Activated CD4-positive, alpha-beta memory T cell treated with anti-CD3 and anti-CD28 coated beads for 36 hours (primary cell): ENCODE measurements at regions of chr12 and their contacts with region 1.

Region 1: DNA sequence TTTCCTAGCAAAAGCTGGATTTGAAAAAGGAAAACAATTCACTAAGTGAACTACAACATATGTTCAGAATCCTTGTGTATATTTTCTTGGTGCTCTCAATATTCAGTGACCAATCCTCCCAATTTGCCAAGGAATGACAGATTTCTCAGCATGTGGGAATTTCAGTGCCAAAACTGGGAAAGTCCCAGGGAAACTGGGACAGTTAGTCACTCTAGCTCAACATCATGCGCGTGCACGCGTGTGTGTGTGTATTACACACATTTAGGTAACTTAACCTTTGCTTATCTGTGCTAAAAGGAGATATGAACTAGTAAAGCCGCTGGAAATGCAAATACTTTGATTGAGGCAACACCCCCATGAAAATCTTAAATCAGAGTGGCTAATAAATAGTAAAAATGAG is 26.1 kb upstream of the SLC6A13 start:
- DNase-seq: no peak
- H3K4me3 Mint-ChIP-seq: no peak overlapping the region
- H3K27ac Mint-ChIP-seq: no peak overlapping the region
- H3K4me1 Mint-ChIP-seq: peaks cover 60% of the 10 kb centered on the region
- H3K27me3 Mint-ChIP-seq: no peaks in the 10 kb centered on the region

Region 2: GRCh38 chr12:153080-153746 is 135.5 kb before region 1 on chr12:
- CTCF ChIA-PET with region 1: no interaction called
- POLR2A ChIA-PET with region 1: no interaction called
- intact Hi-C with region 1: no loop called
- DNase-seq: peak; percentile 73
- H3K4me3 Mint-ChIP-seq: no peak overlapping the region
- H3K27ac Mint-ChIP-seq: no peak overlapping the region
- H3K4me1 Mint-ChIP-seq: no peaks in the 10 kb centered on the region
- H3K27me3 Mint-ChIP-seq: peaks cover 5% of the 10 kb centered on the region

Region 3: DNA sequence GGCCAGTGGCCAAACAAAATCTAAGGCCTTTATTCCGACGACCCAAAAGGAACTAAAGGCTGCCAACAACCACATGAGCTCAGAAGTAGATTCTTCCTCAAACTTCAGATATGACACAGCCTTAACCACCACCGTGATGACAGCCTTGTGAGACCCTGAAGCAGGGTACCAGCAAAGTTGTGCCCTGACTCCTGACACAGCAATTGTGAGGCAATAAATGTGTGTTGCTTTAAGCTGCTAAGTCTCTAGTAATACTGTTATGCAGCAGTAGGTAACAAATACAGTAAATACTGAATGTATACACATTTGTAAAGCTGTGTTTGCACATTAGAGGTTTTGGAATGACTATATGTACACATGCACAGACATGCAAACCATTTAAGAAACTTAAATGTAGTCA is 15.3 kb before region 1 on chr12:
- CTCF ChIA-PET with region 1: no interaction called
- POLR2A ChIA-PET with region 1: interaction called, 11 read pairs
- intact Hi-C with region 1: no loop called
- DNase-seq: peak; percentile 22
- H3K4me3 Mint-ChIP-seq: no peak overlapping the region
- H3K27ac Mint-ChIP-seq: no peak overlapping the region
- H3K4me1 Mint-ChIP-seq: peaks cover 9% of the 10 kb centered on the region
- H3K27me3 Mint-ChIP-seq: no peaks in the 10 kb centered on the region

Region 4: GRCh38 chr12:304805-305204 is 16.1 kb after region 1 on chr12:
- CTCF ChIA-PET with region 1: interaction called, 3 read pairs
- POLR2A ChIA-PET with region 1: interaction called, 6 read pairs
- intact Hi-C with region 1: loop called (anchors 1 kb)
- DNase-seq: no peak
- H3K4me3 Mint-ChIP-seq: no peak overlapping the region
- H3K27ac Mint-ChIP-seq: peak overlapping the region; percentile 0
- H3K4me1 Mint-ChIP-seq: peaks cover 46% of the 10 kb centered on the region
- H3K27me3 Mint-ChIP-seq: no peaks in the 10 kb centered on the region

Region 5: DNA sequence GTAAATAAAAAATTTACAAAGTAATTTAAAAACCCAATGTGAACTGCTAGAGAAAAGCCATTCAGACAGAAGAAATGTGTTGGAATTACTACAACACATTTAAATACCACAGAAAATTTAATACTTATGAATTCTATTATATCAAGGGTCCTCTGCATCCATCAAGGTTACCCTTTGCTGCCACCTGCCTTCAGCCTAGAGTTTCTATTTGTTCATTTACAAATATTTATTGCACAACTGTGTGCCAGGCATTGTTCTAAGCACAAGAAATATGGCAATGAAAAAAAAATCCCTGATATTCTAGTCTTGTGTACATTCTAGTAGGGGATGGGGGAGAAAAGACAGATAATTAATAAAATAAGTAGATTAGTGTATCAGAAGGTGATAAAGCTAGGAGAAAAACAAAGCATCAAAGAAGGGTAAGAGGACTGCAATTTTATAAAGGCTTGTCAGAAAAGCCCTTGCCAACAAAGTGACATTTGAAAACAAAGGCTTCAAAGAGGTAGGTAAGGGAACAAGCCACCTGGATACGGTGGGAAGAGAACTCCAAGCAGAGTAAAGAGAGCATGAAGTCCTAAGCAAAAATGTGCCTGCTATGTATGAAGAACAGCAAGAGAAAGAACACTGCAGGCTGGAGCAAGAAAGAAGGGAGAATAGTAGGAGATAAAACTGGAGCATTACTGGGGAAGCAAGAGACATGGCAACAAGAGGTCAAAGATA is 33.1 kb after region 1 on chr12:
- CTCF ChIA-PET with region 1: no interaction called
- POLR2A ChIA-PET with region 1: no interaction called
- intact Hi-C with region 1: loop called (anchors 5 kb)
- DNase-seq: no peak
- H3K4me3 Mint-ChIP-seq: no peak overlapping the region
- H3K27ac Mint-ChIP-seq: no peak overlapping the region
- H3K4me1 Mint-ChIP-seq: peaks cover 7% of the 10 kb centered on the region
- H3K27me3 Mint-ChIP-seq: no peaks in the 10 kb centered on the region

Region 6: GRCh38 chr12:366820-367219 is 78.1 kb after region 1 on chr12:
- CTCF ChIA-PET with region 1: no interaction called
- POLR2A ChIA-PET with region 1: no interaction called
- intact Hi-C with region 1: no loop called
- DNase-seq: no peak
- H3K4me3 Mint-ChIP-seq: no peak overlapping the region
- H3K27ac Mint-ChIP-seq: no peak overlapping the region
- H3K4me1 Mint-ChIP-seq: peaks cover under 1% of the 10 kb centered on the region
- H3K27me3 Mint-ChIP-seq: no peaks in the 10 kb centered on the region

Region 7: DNA sequence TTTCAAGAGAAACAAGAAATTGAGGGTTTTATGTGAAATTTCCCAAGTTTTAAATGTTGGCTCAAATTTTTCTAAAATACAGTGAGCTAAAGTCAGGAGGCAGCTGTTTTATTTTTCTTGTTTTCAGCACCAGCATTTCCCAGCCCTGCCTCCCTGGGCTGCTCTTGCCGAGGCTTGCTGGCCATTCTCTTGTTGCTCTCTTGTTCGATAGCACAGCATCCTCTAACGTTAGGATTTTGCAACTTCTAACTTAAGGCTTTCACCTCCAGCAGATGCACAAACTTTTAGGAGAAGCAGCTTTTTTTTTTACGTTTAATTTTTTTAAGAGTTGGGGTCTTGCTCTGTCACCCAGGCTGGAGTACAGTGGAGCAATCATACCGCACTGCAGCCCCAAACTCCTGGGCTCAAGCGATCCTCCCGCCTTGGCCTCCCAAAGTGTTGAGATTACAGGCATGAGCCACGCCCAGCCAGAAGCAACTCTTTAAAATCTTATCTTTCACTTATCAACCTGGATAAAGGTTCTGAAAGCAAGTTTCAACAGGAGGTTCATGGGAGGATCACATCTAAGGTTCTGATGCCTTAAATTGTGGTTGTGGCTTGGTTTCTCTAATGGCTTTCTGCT is 211.3 kb after region 1 on chr12:
- CTCF ChIA-PET with region 1: no interaction called
- POLR2A ChIA-PET with region 1: no interaction called
- intact Hi-C with region 1: no loop called
- DNase-seq: no peak
- H3K4me3 Mint-ChIP-seq: no peak overlapping the region
- H3K27ac Mint-ChIP-seq: no peak overlapping the region
- H3K4me1 Mint-ChIP-seq: peaks cover 3% of the 10 kb centered on the region
- H3K27me3 Mint-ChIP-seq: no peaks in the 10 kb centered on the region